ENCODE measurements at regions of chr3 and their contacts with region 1.

Region 1: GRCh38 chr3:151290673-151291072 is 12.3 kb upstream of the P2RY14 start:
- DNase-seq: no peak
- H3K4me3 Mint-ChIP-seq: no peak overlapping the region
- H3K27ac Mint-ChIP-seq: no peak overlapping the region
- H3K4me1 Mint-ChIP-seq: peaks cover 18% of the 10 kb centered on the region
- H3K27me3 Mint-ChIP-seq: peaks cover 4% of the 10 kb centered on the region

Region 2: GRCh38 chr3:151276687-151277042 is 14.0 kb before region 1 on chr3:
- intact Hi-C with region 1: no loop called
- DNase-seq: no peak
- H3K4me3 Mint-ChIP-seq: peak overlapping the region; percentile 45
- H3K27ac Mint-ChIP-seq: peak overlapping the region; percentile 10
- H3K4me1 Mint-ChIP-seq: peaks cover 54% of the 10 kb centered on the region
- H3K27me3 Mint-ChIP-seq: no peaks in the 10 kb centered on the region

Region 3: GRCh38 chr3:151327571-151328198 is 37.0 kb after region 1 on chr3:
- intact Hi-C with region 1: loop called (anchors 1 kb)
- DNase-seq: no peak
- H3K4me3 Mint-ChIP-seq: no peak overlapping the region
- H3K27ac Mint-ChIP-seq: no peak overlapping the region
- H3K4me1 Mint-ChIP-seq: peaks cover 22% of the 10 kb centered on the region
- H3K27me3 Mint-ChIP-seq: no peaks in the 10 kb centered on the region

Region 4: GRCh38 chr3:151425627-151426335 is 135.1 kb after region 1 on chr3:
- intact Hi-C with region 1: loop called (anchors 10 kb)
- DNase-seq: no peak
- H3K4me3 Mint-ChIP-seq: no peak overlapping the region
- H3K27ac Mint-ChIP-seq: no peak overlapping the region
- H3K4me1 Mint-ChIP-seq: peaks cover 3% of the 10 kb centered on the region
- H3K27me3 Mint-ChIP-seq: no peaks in the 10 kb centered on the region

Measured in activated T-helper 2 cell treated with anti-CD3 and anti-CD28 coated beads, Interferon-gamma antibody, Interleukin-2, Interleukin-4, amounts not matched to agents 10 μg/mL and 5 μg/mL and 100 μg/mL, durations not matched to agents 14 hours and 24 hours and 36 hours (primary cell).